Colonic mucosa (tissue), 4 donors: ENCODE measurements at regions of chr3 and their contacts with region 1.

Region 1: DNA sequence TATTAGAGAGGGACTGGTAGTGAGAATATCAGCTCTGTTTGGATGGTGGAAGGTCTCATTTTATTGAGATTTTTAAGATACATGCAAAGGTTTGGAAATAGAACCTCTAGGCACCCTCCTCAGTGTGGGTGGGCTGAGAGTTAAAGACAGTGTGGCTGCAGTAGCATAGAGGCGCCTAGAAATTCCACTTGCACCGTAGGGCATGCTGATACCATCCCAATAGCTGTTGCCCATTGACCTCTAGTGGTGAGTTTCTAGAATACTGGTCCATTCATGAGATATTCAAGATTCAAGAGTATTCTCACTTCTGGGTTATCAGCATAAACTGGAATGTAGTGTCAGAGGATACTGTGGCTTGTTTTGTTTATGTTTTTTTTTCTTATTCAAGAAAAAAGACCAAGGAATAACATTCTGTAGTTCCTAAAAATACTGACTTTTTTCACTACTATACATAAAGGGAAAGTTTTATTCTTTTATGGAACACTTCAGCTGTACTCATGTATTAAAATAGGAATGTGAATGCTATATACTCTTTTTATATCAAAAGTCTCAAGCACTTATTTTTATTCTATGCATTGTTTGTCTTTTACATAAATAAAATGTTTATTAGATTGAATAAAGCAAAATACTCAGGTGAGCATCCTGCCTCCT is 87.2 kb downstream of the TGFBR2 start:
- DNase-seq: peak; percentile 47
- H3K4me3 ChIP-seq: no peak overlapping the region
- H3K27ac ChIP-seq: no peak overlapping the region
- H3K4me1 ChIP-seq: peaks cover 4% of the 10 kb centered on the region
- H3K27me3 ChIP-seq: no peaks in the 10 kb centered on the region
- CTCF ChIP-seq: peak; percentile 67

Region 2: DNA sequence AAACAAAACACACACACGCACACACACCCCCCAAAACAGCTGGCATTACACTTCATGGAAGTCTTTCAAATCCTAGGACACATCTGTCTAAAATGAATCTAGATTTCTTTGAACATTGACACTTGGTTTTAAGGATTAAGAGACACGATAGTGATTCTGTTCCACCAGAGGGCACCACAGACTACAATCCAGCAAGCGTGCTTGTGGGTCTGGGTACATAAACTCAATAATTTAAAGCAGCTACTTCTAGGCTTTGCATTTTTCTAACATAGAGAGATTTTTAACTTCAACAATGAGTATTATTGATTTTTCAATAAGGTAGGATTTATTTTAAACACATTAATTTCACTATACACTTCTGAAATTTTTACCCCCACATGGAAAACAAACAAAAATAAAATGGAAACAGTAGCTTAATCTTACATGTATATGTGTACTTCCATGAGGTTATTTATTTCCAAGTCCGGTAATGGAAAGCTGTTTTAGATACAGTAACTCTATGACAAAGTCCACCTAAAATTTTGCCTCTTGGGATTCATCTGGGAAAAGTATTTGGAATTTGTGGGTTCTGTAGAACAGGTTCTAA is 651.2 kb before region 1 on chr3:
- intact Hi-C with region 1: loop called (anchors 5 kb)
- DNase-seq: peak; percentile 77
- H3K4me3 ChIP-seq: no peak overlapping the region
- H3K27ac ChIP-seq: no peak overlapping the region
- H3K4me1 ChIP-seq: no peaks in the 10 kb centered on the region
- H3K27me3 ChIP-seq: no peaks in the 10 kb centered on the region
- CTCF ChIP-seq: peak; percentile 63

Region 3: DNA sequence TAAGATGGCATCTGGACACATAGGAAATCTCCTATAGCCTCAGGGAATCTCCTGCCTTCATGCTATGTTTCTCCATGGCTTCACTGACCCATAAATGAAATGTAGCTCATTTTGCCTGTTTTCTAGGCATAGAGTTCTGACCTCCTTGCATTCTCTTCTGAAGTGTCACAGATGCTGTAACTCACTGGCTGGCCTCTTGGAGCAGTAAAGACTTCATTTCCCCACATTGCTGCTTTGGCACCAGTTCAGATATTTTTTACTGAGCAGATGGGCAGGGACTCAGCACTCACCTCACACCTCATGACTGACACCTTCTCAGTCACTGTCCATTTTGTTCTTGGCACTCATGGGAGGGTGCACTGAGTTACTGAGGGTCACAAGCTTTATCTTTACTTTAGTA is 373.9 kb before region 1 on chr3:
- intact Hi-C with region 1: loop called (anchors 5 kb)
- DNase-seq: peak; percentile 48
- H3K4me3 ChIP-seq: no peak overlapping the region
- H3K27ac ChIP-seq: no peak overlapping the region
- H3K4me1 ChIP-seq: peaks cover under 1% of the 10 kb centered on the region
- H3K27me3 ChIP-seq: no peaks in the 10 kb centered on the region
- CTCF ChIP-seq: peak; percentile 51